ENCODE measurements at regions of chr18 and their contacts with region 1.

Region 1: GRCh38 chr18:950882-951539 is 46.3 kb downstream of the ADCYAP1 start:
- DNase-seq: no peak
- ATAC-seq: no peak
- H3K4me3 Mint-ChIP-seq: no peak overlapping the region
- H3K27ac Mint-ChIP-seq: no peak overlapping the region
- H3K4me1 Mint-ChIP-seq: no peaks in the 10 kb centered on the region
- H3K27me3 Mint-ChIP-seq: peaks cover 2% of the 10 kb centered on the region

Region 2: DNA sequence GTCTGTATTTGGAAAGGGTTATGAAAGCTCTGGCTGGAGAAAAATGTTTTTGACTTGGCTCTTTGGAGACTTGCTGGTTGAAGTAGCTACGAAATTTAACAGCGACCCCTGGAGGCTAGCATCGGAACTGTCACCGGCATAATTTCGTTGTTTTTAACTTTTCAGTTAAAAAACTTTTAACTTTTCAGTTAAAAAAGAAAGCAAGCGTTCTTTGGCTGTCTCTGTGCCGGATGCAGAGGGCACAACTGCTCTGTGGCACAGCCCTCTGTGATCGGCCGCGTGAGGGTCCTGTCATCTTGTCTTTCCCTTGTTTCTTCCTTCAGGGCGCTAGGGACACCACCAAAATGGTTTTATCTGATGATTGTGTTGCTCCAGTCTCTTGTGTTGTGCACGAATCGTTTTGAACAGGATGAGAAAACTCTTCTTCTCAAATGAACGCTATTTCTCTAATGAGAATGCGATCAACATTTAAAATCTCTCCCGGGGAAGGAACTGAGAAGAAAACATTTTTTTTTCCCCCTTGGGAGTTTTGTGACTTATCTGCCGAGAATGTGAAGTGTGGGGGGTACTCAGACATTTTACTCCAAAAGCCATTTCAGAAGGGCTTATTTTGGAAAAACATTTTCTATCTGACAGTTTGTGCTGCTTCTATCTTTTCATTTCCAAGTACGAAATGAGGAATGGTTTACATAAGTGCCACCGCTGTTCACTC is 10.8 kb after region 1 on chr18:
- CTCF ChIA-PET with region 1: interaction called, 11 read pairs
- POLR2A ChIA-PET with region 1: no interaction called
- DNase-seq: peak; percentile 67
- ATAC-seq: no peak
- H3K4me3 Mint-ChIP-seq: no peak overlapping the region
- H3K27ac Mint-ChIP-seq: no peak overlapping the region
- H3K4me1 Mint-ChIP-seq: no peaks in the 10 kb centered on the region
- H3K27me3 Mint-ChIP-seq: peaks cover 8% of the 10 kb centered on the region

Measured in activated CD8-positive, alpha-beta T cell treated with anti-CD3 and anti-CD28 coated beads, Interleukin-2, amount 10 ng/mL, durations not matched to agents 7 days and 5 days (primary cell).